B cell (primary cell): ENCODE measurements at regions of chr3 and their contacts with region 1.

Region 1: GRCh38 chr3:49839193-49839809 is 17.1 kb downstream of the TRAIP start:
- DNase-seq: peak; percentile 89
- ATAC-seq: peak; percentile 94
- H3K4me3 ChIP-seq: no peak overlapping the region
- H3K4me3 Mint-ChIP-seq: no peak overlapping the region
- H3K27ac ChIP-seq: no peak overlapping the region
- H3K27ac Mint-ChIP-seq: peak overlapping the region; percentile 42
- H3K4me1 ChIP-seq: peaks cover 0 to 5% of the 10 kb centered on the region in 2 donors
- H3K4me1 Mint-ChIP-seq: peaks cover 4% of the 10 kb centered on the region
- H3K27me3 ChIP-seq: no peaks in the 10 kb centered on the region
- H3K27me3 Mint-ChIP-seq: no peaks in the 10 kb centered on the region
- CTCF ChIP-seq: peak; percentile 82

Region 2: DNA sequence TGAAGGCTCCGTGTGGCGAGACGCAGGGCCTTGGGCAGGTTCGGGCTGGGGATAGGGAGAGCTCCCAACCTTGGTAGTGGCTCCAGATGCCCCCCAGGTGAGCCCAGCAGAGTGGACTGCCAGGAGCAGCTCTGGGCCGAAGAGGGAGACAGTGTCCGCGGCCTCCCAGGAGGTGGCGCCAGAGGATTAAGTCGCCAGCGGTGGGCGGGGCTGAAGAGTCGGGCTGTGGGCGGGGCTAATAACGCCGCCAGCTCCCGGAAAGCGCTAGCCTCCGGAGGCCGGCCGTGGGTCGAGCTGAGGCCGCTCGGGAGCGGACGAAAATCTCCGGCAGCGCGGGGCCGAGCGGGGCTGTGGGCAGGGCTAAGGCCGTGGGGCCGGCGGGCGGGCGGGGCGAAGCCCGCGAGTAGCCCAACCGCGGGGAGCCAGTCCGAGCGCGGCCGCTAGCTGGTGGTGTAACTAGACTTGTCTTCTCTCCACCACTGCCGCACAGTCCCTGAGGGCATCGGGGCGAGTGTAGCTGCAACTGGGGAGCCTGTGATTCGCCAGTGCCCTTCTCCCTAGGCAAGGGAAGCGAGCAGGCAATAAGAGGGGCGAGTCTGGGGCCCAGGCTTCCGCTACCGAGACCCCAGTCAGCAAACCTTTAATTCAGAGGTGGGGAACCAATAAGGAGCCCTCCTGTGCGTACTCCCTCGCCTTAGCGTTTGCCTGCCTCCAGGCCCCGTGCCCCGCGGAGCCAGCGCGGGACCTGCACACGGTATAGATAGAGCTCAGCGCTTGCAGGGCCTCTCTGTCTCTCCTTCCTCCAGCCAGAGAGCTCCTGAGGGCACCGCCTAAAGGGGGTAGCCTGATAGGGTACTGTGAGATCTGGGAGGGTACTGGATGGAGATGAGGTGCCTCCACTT is 299.4 kb before region 1 on chr3:
- CTCF ChIA-PET with region 1: interaction called, 33 read pairs
- POLR2A ChIA-PET with region 1: no interaction called
- intact Hi-C with region 1: loop called (anchors 1 kb)
- DNase-seq: peak; percentile 93
- ATAC-seq: peak; percentile 94
- H3K4me3 ChIP-seq: peak overlapping the region; percentile 19 to 82 (median 63)
- H3K4me3 Mint-ChIP-seq: peak overlapping the region; percentile 84
- H3K27ac ChIP-seq: peak overlapping the region; percentile 16 to 63
- H3K27ac Mint-ChIP-seq: peak overlapping the region; percentile 68
- H3K4me1 ChIP-seq: peaks cover 0 to 6% of the 10 kb centered on the region in 2 donors
- H3K4me1 Mint-ChIP-seq: peaks cover 7% of the 10 kb centered on the region
- H3K27me3 ChIP-seq: peaks cover 0 to 4% (median 0%) of the 10 kb centered on the region in 4 experiments
- H3K27me3 Mint-ChIP-seq: peaks cover 19% of the 10 kb centered on the region
- CTCF ChIP-seq: peak; percentile 92

Region 3: DNA sequence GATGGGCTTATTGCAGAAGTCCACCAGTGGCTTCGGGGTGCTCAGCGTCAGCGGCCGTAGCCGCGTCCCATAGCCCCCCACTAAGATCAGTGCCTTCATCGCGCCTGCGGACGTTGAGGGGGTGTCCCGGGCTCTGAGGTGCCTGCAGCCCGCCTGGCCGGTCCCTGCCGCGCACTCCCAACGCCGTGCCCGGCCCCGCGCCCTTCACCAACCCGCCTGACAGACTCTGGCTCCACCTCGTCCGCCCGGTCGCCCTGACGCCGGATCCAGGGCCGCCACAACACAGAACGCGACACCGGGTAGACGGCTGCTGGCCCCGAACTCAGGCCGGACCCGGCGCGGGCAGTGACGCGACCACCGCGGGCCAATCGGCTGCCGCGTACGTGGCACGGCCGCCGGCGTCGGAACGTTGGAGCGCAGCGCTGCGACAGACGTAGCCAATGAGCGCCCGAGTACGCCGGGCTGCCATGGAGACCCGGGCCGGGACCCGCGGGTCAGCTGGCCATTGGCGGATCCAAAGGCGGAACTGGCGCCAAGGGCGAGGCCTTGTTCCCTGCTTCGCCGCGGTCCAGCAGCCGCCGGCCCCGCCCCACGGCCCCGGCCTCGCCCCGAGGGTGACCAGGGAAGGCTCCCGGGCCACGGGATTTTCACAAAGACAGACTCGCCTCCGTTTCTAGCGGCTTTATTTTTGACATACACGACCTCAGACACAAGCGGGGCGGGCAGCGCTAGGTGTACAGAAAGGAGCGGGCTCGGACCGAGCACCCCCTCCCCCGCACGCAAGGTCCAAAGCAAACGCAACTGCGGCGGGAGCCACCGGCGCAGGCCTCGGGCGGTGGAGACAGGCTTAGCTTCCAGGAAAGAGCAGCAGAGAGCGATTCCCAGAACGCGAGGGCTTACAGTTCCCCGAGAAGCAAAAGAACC is 115.4 kb before region 1 on chr3 and contains the start of gene GMPPB:
- CTCF ChIA-PET with region 1: interaction called, 22 read pairs
- POLR2A ChIA-PET with region 1: no interaction called
- intact Hi-C with region 1: loop called (anchors 1 kb)
- DNase-seq: peak; percentile 97
- ATAC-seq: peak; percentile 78
- H3K4me3 ChIP-seq: peak within 1 kb of the TSS; percentile 63 to 99 (median 92)
- H3K4me3 Mint-ChIP-seq: peak within 1 kb of the TSS; percentile 96
- H3K27ac ChIP-seq: peak within 1 kb of the TSS; percentile 100
- H3K27ac Mint-ChIP-seq: peak within 1 kb of the TSS; percentile 97
- H3K4me1 ChIP-seq: peaks cover 27 to 59% of the 10 kb centered on the region in 2 donors
- H3K4me1 Mint-ChIP-seq: peaks cover 59% of the 10 kb centered on the region
- H3K27me3 ChIP-seq: no peaks in the 10 kb centered on the region
- H3K27me3 Mint-ChIP-seq: no peaks in the 10 kb centered on the region
- CTCF ChIP-seq: no peak
- total RNA-seq, gene GMPPB: 30.0 and 31.4 TPM in 2 replicates

Region 4: GRCh38 chr3:49802719-49803464 is 36.4 kb before region 1 on chr3 and contains the start of gene INKA1:
- CTCF ChIA-PET with region 1: interaction called, 547 read pairs
- POLR2A ChIA-PET with region 1: interaction called, 99 read pairs
- intact Hi-C with region 1: no loop called
- DNase-seq: peak; percentile 94
- ATAC-seq: peak; percentile 63
- H3K4me3 ChIP-seq: peak within 1 kb of the TSS; percentile 73 to 99 (median 95)
- H3K4me3 Mint-ChIP-seq: peak within 1 kb of the TSS; percentile 86
- H3K27ac ChIP-seq: peak within 1 kb of the TSS; percentile 91 to 97
- H3K27ac Mint-ChIP-seq: peak within 1 kb of the TSS; percentile 98
- H3K4me1 ChIP-seq: peaks cover 42 to 47% of the 10 kb centered on the region in 2 donors
- H3K4me1 Mint-ChIP-seq: peaks cover 52% of the 10 kb centered on the region
- H3K27me3 ChIP-seq: peaks cover 0 to 3% (median 0%) of the 10 kb centered on the region in 4 experiments
- H3K27me3 Mint-ChIP-seq: peaks cover 5% of the 10 kb centered on the region
- CTCF ChIP-seq: peak; percentile 84
- total RNA-seq, gene INKA1: 25.8 and 28.2 TPM in 2 replicates

Region 5: DNA sequence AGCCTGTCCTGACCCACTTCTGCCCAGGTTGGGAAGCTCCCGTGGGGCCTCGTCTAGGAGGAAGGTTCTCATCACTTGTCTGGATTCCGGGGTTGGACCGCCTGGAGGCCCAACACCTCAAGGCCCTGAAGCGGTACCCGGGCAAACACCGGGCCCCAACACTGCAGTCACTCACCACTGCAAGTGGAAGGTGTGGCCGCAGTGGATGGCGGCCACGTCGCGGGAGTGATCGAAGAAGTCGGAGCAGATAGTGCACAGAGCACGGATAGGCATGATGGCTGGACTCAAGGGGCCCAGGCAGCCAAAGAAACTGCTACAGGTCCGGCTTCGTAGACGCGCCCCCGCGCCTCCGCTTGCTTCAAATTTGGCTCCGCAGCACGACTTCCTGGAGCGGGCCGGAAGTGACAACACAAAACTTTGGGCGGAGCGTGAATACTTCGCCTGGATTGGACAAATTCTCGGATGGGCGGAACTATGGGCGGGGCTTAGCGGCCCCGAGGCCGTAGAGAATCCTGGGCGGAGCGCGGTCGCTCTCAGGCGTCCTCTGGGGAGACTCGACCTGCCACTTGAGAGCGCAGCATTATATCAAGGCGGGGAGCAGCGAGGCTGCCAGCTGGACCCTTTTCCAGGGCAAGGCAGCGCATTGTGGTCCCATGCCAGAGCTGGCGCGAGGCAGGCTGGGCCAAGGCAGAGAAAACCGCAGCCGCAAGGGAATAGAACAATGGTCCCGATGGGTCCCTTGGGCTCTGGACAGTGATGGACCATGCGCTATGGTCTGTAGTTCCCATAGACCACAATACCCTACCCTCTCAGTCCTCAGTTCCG is 17.1 kb after region 1 on chr3 and contains the start of gene TRAIP:
- CTCF ChIA-PET with region 1: interaction called, 18 read pairs
- POLR2A ChIA-PET with region 1: no interaction called
- intact Hi-C with region 1: loop called (anchors 1 kb)
- DNase-seq: peak; percentile 98
- ATAC-seq: peak; percentile 100
- H3K4me3 ChIP-seq: peak within 1 kb of the TSS; percentile 53 to 91 (median 69)
- H3K4me3 Mint-ChIP-seq: peak within 1 kb of the TSS; percentile 91
- H3K27ac ChIP-seq: peak within 1 kb of the TSS; percentile 56 to 59
- H3K27ac Mint-ChIP-seq: peak within 1 kb of the TSS; percentile 90
- H3K4me1 ChIP-seq: peaks cover 10 to 15% of the 10 kb centered on the region in 2 donors
- H3K4me1 Mint-ChIP-seq: peaks cover 11% of the 10 kb centered on the region
- H3K27me3 ChIP-seq: peaks cover 0 to 3% (median 0%) of the 10 kb centered on the region in 4 experiments
- H3K27me3 Mint-ChIP-seq: no peaks in the 10 kb centered on the region
- CTCF ChIP-seq: no peak
- total RNA-seq, gene TRAIP: 8.7 and 9.9 TPM in 2 replicates

Region 6: DNA sequence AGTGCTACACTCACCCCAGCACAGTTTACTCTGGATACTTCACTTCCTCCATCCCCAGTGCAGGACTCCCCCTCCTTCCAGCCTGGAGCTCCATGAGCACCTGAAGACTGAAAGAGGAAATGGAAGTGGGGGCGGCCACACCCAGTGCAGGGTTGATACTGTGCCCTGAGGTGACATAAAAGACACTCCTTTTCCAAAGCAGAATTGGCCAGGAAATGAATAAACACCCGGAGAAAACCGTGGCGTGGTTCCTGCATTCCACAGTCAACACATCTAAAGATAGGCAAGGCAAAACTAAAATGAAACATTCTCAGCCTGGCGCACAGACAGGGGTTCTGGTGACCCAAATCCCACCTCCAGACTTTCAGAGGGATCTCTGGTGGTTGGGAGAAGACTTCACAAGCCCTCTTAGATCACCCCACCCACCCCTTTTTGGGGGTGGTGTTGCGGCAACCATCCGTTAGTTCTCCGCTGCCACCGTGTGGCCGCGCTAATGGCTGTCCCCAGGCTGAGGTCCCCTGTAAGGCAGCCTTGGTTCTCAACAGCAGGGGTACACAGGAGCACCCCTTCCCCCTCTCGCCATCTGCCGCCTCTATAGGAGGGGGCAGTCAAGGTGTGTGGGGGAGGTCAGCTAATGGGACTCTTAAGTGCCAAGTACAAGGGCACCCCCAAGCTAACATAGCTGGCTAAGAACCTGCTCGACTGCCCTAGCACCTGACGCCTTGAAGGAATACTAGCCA is 66.9 kb after region 1 on chr3:
- CTCF ChIA-PET with region 1: interaction called, 17 read pairs
- POLR2A ChIA-PET with region 1: interaction called, 3 read pairs
- intact Hi-C with region 1: no loop called
- DNase-seq: peak; percentile 66
- ATAC-seq: peak; percentile 37
- H3K4me3 ChIP-seq: peak overlapping the region in 3 of 5 experiments; percentile 5 to 39 (median 6)
- H3K4me3 Mint-ChIP-seq: peak overlapping the region; percentile 74
- H3K27ac ChIP-seq: peak overlapping the region in 1 of 2 donors; percentile 30
- H3K27ac Mint-ChIP-seq: peak overlapping the region; percentile 83
- H3K4me1 ChIP-seq: peaks cover 14 to 36% of the 10 kb centered on the region in 2 donors
- H3K4me1 Mint-ChIP-seq: peaks cover 26% of the 10 kb centered on the region
- H3K27me3 ChIP-seq: no peaks in the 10 kb centered on the region
- H3K27me3 Mint-ChIP-seq: no peaks in the 10 kb centered on the region
- CTCF ChIP-seq: peak; percentile 62

Region 7: DNA sequence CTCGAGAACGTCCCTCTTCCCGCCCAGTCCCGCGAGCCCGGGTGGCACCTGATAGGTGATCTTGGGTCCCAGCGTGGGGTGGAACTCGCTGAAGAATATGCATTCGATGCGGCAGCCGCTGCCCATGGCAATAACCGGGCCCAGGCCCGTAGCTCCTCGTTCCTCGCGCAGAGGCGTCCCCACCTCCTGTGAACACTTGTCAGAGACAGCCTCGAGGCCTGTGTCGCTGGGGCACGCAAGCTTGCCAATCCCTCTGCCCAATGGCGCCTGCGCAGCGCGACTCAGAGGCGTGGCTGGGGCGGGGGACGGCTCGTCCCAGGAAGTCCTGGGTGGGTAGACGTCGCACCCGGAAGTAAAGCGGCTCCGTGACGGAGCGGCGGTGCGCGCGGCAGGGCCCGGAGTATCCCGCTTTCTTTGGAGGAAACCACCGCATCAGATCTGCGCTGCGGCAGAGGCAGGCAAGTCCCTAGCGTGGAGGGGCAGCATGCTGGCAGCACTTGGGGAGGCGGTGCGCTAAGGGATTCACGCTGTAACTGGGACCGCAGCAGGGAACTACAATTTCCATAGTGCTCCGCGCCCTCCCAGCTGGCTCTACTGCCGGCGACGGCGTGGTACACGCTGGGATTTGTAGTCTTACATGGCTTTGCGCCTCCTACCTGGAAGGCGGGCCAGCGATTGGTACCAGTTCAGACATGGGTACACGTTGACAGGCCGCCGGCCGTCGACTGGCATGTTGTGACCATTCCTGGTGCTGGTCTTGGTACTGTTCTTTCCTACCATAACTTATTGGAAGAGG is 511.4 kb after region 1 on chr3 and contains the starts of genes CYB561D2 and NPRL2:
- CTCF ChIA-PET with region 1: no interaction called
- POLR2A ChIA-PET with region 1: no interaction called
- intact Hi-C with region 1: no loop called
- DNase-seq: peak; percentile 98
- ATAC-seq: peak; percentile 87
- H3K4me3 ChIP-seq: peak within 1 kb of the TSS; percentile 71 to 98 (median 91)
- H3K4me3 Mint-ChIP-seq: peak within 1 kb of the TSS; percentile 99
- H3K27ac ChIP-seq: peak within 1 kb of the TSS; percentile 85 to 93
- H3K27ac Mint-ChIP-seq: peak within 1 kb of the TSS; percentile 100
- H3K4me1 ChIP-seq: peaks cover 25 to 41% of the 10 kb centered on the region in 2 donors
- H3K4me1 Mint-ChIP-seq: peaks cover 52% of the 10 kb centered on the region
- H3K27me3 ChIP-seq: no peaks in the 10 kb centered on the region
- H3K27me3 Mint-ChIP-seq: no peaks in the 10 kb centered on the region
- CTCF ChIP-seq: no peak
- total RNA-seq, gene CYB561D2: 36.1 and 39.5 TPM in 2 replicates
- total RNA-seq, gene NPRL2: 29.6 and 31.3 TPM in 2 replicates